ENCODE measurements at regions of chr5 and their contacts with region 1.

Region 1: GRCh38 chr5:58649716-58650115 is 66.8 kb downstream of the RAB3C start:
- DNase-seq: no peak
- H3K4me3 ChIP-seq: no peak overlapping the region
- H3K27ac ChIP-seq: no peak overlapping the region
- H3K4me1 ChIP-seq: no peaks in the 10 kb centered on the region
- H3K27me3 ChIP-seq: no peaks in the 10 kb centered on the region
- CTCF ChIP-seq: no peak

Region 2: GRCh38 chr5:58629271-58630159 is 20.2 kb before region 1 on chr5:
- CTCF ChIA-PET with region 1: no interaction called
- POLR2A ChIA-PET with region 1: no interaction called
- intact Hi-C with region 1: no loop called
- DNase-seq: no peak
- H3K4me3 ChIP-seq: no peak overlapping the region
- H3K27ac ChIP-seq: no peak overlapping the region
- H3K4me1 ChIP-seq: no peaks in the 10 kb centered on the region
- H3K27me3 ChIP-seq: no peaks in the 10 kb centered on the region
- CTCF ChIP-seq: no peak

Region 3: GRCh38 chr5:58675341-58675740 is 25.6 kb after region 1 on chr5:
- CTCF ChIA-PET with region 1: no interaction called
- POLR2A ChIA-PET with region 1: interaction called, 14 read pairs
- intact Hi-C with region 1: no loop called
- DNase-seq: no peak
- H3K4me3 ChIP-seq: no peak overlapping the region
- H3K27ac ChIP-seq: no peak overlapping the region
- H3K4me1 ChIP-seq: no peaks in the 10 kb centered on the region
- H3K27me3 ChIP-seq: no peaks in the 10 kb centered on the region
- CTCF ChIP-seq: no peak

Measured in PC-9 (cell line).